ENCODE measurements at regions of chr17 and their contacts with region 1.

Region 1: GRCh38 chr17:66056148-66056547 is 135.8 kb downstream of the CEP112 start:
- DNase-seq: no peak
- H3K4me3 ChIP-seq: no peak overlapping the region
- H3K27me3 ChIP-seq: no peaks in the 10 kb centered on the region
- CTCF ChIP-seq: no peak

Region 2: GRCh38 chr17:65287040-65287439 is 769.1 kb before region 1 on chr17:
- CTCF ChIA-PET with region 1: no interaction called
- POLR2A ChIA-PET with region 1: interaction called, 10 read pairs
- DNase-seq: no peak
- H3K4me3 ChIP-seq: no peak overlapping the region
- H3K27me3 ChIP-seq: peaks cover 1% of the 10 kb centered on the region; the same call in 1 of the 2 replicates
- CTCF ChIP-seq: no peak

Region 3: GRCh38 chr17:66296289-66296776 is 240.2 kb after region 1 on chr17:
- CTCF ChIA-PET with region 1: no interaction called
- POLR2A ChIA-PET with region 1: no interaction called
- DNase-seq: no peak
- H3K4me3 ChIP-seq: no peak overlapping the region
- H3K27me3 ChIP-seq: no peaks in the 10 kb centered on the region
- CTCF ChIP-seq: no peak